Endothelial cell of umbilical vein (primary cell): ENCODE measurements at regions of chr9 and their contacts with region 1.

Region 1: DNA sequence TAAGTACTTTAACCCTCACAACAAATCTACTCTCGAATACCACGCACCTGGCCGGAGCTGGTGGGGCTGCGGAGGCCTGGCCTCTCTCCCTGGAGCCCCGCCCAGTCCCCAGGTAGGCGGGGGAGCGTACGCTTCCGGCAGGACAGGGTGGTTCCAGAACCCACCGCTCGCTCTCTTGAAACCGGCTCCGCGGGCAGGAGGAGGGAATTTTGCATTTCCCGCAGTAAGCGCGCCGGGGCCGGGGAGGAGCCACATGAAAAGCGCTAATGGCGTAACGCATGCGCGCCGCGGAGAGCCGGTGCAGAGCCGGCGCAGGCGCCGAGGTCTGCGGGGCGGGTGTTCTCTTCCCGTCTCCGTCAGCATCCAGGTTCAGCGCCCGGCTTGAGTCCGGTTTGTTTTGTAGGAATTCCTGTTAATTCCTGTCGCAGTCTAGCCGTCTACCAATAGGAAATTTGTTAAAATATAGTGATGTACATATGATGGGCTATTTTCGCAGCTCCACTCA is 20.8 kb downstream of the CAVIN4 start:
- DNase-seq: peak; percentile 77
- H3K4me3 ChIP-seq: peak overlapping the region; percentile 40 to 70 (median 41)
- H3K27ac ChIP-seq: no peak overlapping the region
- H3K4me1 ChIP-seq: peaks cover 12% of the 10 kb centered on the region
- H3K27me3 ChIP-seq: no peaks in the 10 kb centered on the region
- CTCF ChIP-seq: no peak
- POLR2A ChIP-seq: peak; percentile 74

Region 2: DNA sequence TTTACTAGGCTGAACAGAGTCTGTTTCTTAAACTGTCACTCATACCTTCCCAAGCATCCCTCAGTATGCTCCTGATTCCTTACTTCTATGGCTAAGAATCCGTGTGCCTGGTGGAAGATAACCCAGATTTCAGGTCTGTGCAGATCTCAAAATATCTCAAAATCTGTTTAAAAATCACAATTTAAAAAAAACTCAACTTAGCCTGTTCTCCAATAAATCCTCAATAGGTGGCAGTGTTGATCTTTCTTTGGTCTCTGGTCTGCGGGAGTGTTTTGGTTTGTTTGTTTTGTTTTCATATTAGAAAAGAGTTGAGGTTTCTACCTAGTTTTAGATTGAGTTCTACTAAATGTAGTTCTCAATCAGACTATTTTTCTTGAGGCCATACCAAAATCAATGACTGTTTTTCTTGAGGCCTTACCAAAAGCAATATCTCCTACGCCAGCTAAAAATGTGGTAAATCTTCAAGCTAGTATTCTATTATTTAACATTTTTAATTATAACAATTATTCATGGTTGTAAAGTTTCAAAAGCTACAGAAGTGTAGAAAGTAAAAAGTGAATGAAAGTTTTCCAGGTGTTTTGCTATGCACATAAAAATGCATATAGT is 1435.8 kb before region 1 on chr9:
- CTCF ChIA-PET with region 1: interaction called, 3 read pairs
- POLR2A ChIA-PET with region 1: interaction called, 3 read pairs
- dilution Hi-C with region 1: no loop called
- intact Hi-C with region 1: loop called (anchors 5 kb)
- DNase-seq: peak; percentile 62
- H3K4me3 ChIP-seq: no peak overlapping the region
- H3K27ac ChIP-seq: no peak overlapping the region
- H3K4me1 ChIP-seq: peaks cover 3% of the 10 kb centered on the region
- H3K27me3 ChIP-seq: peaks cover 2 to 7% of the 10 kb centered on the region in 2 experiments
- CTCF ChIP-seq: peak; percentile 43 to 44
- POLR2A ChIP-seq: no peak

Region 3: DNA sequence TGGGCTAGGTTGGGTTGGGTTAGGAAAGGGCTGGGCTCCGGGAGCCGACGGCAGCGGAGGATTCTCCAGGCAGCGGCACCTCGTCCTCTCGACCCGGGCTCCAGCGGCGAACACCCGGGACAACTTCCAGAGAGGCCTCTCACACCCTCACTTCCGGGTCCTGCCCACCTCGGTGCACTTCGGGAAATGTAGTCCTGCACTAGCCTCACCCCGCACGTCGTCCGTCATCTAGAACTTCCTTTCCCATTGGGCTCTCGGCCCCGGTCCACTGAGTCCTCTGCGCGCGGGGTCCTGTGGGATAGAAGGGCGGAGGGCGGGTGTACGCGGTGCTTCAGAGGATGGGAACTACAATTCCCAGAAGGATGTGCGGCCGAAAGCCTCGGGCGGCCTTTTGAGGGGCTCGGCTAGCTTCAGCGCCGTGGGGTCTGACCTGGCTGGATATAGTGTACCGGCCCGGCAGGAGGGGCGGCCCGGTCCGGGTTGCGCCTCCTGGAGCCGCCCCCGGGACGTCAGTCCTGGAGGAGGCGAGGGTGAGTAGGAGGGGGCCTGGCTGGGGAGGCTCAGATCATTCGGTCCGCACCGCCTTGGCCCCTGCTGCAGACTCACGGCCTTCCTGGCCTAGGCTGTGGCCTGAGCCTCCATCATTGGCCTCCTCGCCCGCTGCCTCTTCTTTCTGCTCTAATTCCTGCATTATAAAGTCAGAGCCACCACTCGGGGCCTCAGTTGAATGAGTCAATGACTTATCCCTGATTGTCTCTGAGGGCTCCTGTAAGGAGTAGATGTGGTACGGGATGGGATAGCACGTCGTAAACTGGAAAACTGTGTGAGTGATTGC is 499.6 kb before region 1 on chr9 and contains the starts of genes ERP44 and INVS:
- CTCF ChIA-PET with region 1: no interaction called
- POLR2A ChIA-PET with region 1: no interaction called
- dilution Hi-C with region 1: no loop called
- intact Hi-C with region 1: loop called (anchors 5 kb)
- DNase-seq: peak; percentile 99
- H3K4me3 ChIP-seq: peak within 1 kb of the TSS; percentile 63 to 85 (median 76)
- H3K27ac ChIP-seq: peak within 1 kb of the TSS; percentile 74
- H3K4me1 ChIP-seq: peaks cover 20% of the 10 kb centered on the region
- H3K27me3 ChIP-seq: no peaks in the 10 kb centered on the region
- CTCF ChIP-seq: no peak
- POLR2A ChIP-seq: peak; percentile 93
- total RNA-seq, gene ERP44: 19.3 and 21.4 TPM in 2 replicates
- total RNA-seq, gene INVS: 17.9 and 20.3 TPM in 2 replicates

Region 4: DNA sequence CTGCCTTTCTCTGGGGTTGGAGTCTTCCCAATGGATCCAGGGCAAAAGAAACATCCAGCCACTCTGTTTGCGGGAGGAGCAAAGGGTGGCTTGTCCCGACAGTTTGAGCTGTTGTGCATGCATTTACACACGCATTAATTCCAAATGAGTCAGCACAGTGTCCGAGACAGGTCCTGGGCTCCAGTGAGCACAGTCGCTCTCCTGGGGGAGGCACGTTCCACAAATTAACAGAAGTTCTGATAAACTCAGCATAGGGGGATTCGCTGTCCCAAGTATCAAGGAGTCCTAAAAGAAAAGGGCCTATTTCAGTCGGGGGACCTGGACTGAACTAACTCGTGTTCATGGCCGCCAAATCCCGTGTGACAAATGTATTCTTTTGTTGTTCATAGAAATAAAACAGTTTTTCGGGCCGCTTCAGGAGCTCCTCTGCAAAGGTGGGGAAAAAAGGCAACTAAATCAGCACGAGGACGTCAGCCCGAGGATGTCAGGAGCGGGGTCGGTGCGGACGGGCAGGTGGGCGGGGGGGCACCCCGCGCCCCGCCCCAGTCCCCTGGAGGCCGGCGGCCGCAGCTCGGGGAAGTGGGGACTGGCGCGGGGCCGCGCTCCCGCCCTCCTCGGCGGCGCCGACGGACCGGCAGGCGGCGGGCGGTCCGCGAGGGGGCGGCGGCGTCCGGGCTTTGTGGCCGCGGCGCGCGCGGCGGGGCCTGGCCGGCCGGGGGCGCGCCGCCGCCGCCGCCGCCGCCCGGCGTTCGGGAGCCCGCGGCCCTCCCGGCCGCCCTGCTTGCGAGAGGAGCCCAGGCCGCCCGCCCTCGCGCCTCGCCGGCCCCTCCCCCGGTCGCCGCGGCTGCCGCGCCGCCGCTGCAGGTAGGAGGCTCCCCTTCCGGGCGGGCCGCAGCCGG is 171.9 kb before region 1 on chr9 and contains the start of gene MSANTD3:
- CTCF ChIA-PET with region 1: interaction called, 5 read pairs
- POLR2A ChIA-PET with region 1: interaction called, 3 read pairs
- dilution Hi-C with region 1: no loop called
- intact Hi-C with region 1: loop called (anchors 2 kb)
- DNase-seq: peak; percentile 84
- H3K4me3 ChIP-seq: peak within 1 kb of the TSS; percentile 91 to 96 (median 94)
- H3K27ac ChIP-seq: peak within 1 kb of the TSS; percentile 98
- H3K4me1 ChIP-seq: peaks cover 36% of the 10 kb centered on the region
- H3K27me3 ChIP-seq: no peaks in the 10 kb centered on the region
- CTCF ChIP-seq: no peak
- POLR2A ChIP-seq: peak; percentile 59
- total RNA-seq, gene MSANTD3: 82.7 and 88.5 TPM in 2 replicates

Region 5: DNA sequence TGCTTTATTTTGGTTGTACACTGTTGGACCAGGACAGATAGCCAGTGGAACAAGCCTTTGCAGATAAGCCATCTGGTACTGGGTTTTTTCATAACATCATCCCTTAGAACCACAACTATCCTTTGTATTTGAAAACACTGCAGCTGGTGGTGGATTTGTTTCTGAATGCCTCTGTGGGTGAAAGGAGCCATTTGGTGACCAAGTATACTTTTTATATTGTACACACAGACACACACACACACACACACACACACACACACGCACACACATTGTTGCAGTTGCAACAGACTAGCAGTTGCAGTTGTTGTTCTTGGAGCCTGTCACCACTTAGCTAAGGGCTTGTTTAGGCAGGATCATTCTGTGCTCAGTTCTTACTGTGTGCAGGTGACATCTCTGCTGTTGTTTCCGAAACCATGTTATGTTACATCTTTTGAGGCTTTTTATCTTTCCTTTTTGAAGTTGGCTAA is 43.7 kb before region 1 on chr9:
- CTCF ChIA-PET with region 1: no interaction called
- POLR2A ChIA-PET with region 1: no interaction called
- dilution Hi-C with region 1: no loop called
- intact Hi-C with region 1: no loop called
- DNase-seq: peak; percentile 14
- H3K4me3 ChIP-seq: no peak overlapping the region
- H3K27ac ChIP-seq: no peak overlapping the region
- H3K4me1 ChIP-seq: no peaks in the 10 kb centered on the region
- H3K27me3 ChIP-seq: no peaks in the 10 kb centered on the region
- CTCF ChIP-seq: no peak
- POLR2A ChIP-seq: no peak

Region 6: GRCh38 chr9:100714372-100715099 is 115.8 kb after region 1 on chr9:
- CTCF ChIA-PET with region 1: interaction called, 4 read pairs
- POLR2A ChIA-PET with region 1: no interaction called
- dilution Hi-C with region 1: no loop called
- intact Hi-C with region 1: loop called (anchors 5 kb)
- DNase-seq: peak; percentile 57
- H3K4me3 ChIP-seq: no peak overlapping the region
- H3K27ac ChIP-seq: no peak overlapping the region
- H3K4me1 ChIP-seq: no peaks in the 10 kb centered on the region
- H3K27me3 ChIP-seq: no peaks in the 10 kb centered on the region
- CTCF ChIP-seq: peak; percentile 80 to 81
- POLR2A ChIP-seq: no peak

Region 7: DNA sequence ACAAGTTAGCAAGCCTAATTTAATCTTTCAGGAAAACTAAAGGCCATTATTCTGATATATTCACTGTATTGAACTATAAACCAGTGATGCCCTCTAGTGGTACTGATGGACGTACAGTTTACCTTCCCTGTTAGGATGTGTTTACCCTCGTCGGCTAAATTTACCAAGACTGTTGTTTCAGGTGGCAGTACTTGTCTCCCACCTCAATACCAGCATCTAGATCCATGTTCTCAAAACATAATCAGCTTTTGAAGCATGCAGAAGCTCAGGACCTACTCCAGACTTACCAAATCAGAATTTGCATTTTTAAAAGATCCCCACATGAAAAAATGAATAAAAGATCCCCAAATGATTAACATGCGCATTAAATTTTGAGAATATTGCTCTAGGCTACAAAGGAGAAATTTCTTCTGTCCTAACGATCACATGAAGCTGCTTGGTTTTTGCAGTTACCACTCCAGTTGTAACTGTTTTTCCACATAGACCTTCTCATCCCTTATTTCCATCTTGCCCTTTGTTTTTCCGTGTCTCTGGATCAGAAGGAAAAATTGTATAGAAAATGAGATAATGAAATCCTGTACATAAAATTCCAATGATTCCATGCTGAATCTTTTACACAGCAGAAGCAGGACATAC is 789.3 kb after region 1 on chr9:
- CTCF ChIA-PET with region 1: interaction called, 26 read pairs
- POLR2A ChIA-PET with region 1: no interaction called
- dilution Hi-C with region 1: no loop called
- intact Hi-C with region 1: no loop called
- DNase-seq: peak; percentile 50
- H3K4me3 ChIP-seq: no peak overlapping the region
- H3K27ac ChIP-seq: no peak overlapping the region
- H3K4me1 ChIP-seq: no peaks in the 10 kb centered on the region
- H3K27me3 ChIP-seq: no peaks in the 10 kb centered on the region
- CTCF ChIP-seq: peak; percentile 47 to 51
- POLR2A ChIP-seq: no peak